AG04450 (cell line): ENCODE measurements at regions of chr4 and their contacts with region 1.

Region 1: GRCh38 chr4:42865572-42866189 is 26.8 kb upstream of the GRXCR1 start:
- DNase-seq: no peak
- H3K4me3 ChIP-seq: no peak overlapping the region
- H3K27ac ChIP-seq: no peak overlapping the region
- H3K27me3 ChIP-seq: no peaks in the 10 kb centered on the region
- CTCF ChIP-seq: peak; percentile 64

Region 2: DNA sequence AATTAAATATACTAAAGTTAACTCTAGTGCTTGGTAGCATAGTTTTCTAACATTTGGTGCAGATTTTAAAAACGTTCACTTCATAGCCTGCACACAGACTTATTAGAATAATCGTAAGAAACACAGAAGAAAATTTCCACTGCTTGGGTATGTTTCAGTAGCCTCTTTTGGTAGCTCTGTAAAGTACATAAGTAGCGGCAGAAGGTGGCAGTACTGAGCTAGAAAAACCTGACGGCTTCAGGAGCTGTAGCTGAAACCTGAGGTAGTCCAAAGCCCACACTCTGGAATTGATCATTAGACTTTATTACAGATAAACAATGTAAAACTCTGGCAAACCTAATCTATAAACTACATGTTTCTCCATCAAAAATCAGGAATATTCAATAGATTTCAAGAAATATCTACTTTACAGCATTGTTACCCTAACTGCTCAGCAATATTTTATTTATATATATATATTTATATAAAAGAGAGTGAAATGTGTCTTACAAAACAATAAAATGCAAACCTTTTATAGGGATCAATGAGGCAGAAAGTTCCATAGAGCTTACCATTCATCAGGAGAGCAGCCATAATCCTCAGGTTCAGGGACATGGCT is 297.0 kb before region 1 on chr4:
- CTCF ChIA-PET with region 1: interaction called, 31 read pairs
- POLR2A ChIA-PET with region 1: no interaction called
- DNase-seq: peak; percentile 20
- H3K4me3 ChIP-seq: no peak overlapping the region
- H3K27ac ChIP-seq: no peak overlapping the region
- H3K27me3 ChIP-seq: no peaks in the 10 kb centered on the region
- CTCF ChIP-seq: peak; percentile 75

Region 3: DNA sequence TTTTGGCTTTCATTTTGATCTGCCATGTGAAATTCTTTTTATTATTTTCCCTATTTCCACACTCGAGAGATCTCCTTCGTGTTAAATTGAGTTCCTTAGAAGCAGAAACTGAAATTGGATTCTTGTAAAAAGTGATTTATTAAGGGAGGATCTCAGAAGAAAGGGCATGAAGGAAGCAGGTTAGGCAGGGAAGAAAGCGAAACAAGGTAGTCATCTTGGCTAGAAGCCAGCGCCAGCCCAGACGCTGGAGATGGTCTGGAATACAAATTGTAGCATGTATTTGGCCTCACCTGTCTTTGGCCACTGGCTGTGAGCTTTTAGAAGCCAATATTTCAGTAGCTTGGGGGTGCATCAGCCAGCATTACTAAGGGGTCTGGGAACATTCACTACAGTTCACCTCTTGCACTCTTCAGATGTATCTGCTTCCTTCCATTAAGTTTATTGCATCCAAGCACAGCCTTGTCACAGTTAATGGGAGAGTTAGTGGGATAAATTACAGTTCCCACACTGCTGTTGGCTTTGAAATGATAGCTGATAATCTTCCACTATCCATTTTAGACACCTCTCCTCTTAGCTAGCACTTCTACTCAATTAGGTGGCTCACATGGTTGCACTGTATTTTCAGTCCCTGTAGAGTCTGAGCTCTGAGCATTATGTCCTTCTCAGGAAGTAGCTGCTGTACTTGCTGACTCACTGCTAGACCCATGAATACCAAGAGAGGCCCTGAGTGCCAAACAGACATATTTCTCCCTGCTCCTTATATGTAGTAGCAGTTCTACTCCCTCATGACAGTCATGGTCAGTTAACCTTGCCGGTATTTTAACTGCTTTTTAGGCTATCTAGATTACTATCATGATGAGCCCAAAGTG is 41.4 kb after region 1 on chr4:
- CTCF ChIA-PET with region 1: no interaction called
- POLR2A ChIA-PET with region 1: no interaction called
- DNase-seq: no peak
- H3K4me3 ChIP-seq: no peak overlapping the region
- H3K27ac ChIP-seq: no peak overlapping the region
- H3K27me3 ChIP-seq: no peaks in the 10 kb centered on the region
- CTCF ChIP-seq: no peak